Panc1 (cell line): ENCODE measurements at regions of chr5 and their contacts with region 1.

Region 1: GRCh38 chr5:77168161-77168875 is 42.2 kb upstream of the PDE8B start:
- DNase-seq: no peak
- ATAC-seq: peak; percentile 26; the same call in 1 of the 2 replicates
- H3K4me3 ChIP-seq: no peak overlapping the region
- H3K27ac ChIP-seq: no peak overlapping the region
- H3K4me1 ChIP-seq: no peaks in the 10 kb centered on the region
- H3K27me3 ChIP-seq: peaks cover 25% of the 10 kb centered on the region
- CTCF ChIP-seq: no peak

Region 2: GRCh38 chr5:76999423-76999822 is 168.9 kb before region 1 on chr5:
- CTCF ChIA-PET with region 1: no interaction called
- POLR2A ChIA-PET with region 1: no interaction called
- in situ Hi-C with region 1: no loop called
- intact Hi-C with region 1: no loop called
- DNase-seq: no peak
- ATAC-seq: no peak
- H3K4me3 ChIP-seq: no peak overlapping the region
- H3K27ac ChIP-seq: no peak overlapping the region
- H3K4me1 ChIP-seq: no peaks in the 10 kb centered on the region
- H3K27me3 ChIP-seq: peaks cover 7% of the 10 kb centered on the region; the same call in 1 of the 2 replicates
- CTCF ChIP-seq: no peak

Region 3: DNA sequence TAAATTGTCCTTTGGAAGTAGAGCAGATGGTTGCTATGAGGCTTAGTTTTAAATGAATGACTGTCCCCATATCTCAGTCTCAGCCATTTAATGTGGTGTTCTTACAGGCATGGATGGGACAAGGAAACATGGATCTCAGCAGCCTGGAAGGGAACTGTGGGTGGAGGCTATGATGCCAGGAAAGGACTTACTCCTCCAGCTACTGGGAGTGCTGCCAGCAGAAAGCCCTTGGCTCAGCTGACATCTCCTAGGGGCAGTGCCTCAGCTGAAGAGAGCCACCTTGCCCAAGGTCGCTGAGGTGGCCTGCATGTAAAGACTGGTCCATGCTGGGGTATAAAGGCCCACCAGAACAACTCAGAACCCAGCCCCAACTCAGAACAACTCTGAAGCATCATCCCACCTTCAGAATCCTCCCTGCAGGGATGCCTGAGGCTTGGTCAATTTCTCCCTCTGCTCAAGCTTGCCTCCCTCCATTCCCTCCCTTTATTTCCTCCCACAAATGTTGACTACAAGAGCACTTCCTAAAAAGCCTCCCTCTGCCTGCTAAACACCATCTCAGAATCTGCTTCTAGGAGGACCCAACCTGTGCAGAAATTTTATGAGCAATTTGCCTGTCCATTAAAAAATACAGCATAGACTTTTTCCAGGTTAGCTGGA is 40.3 kb after region 1 on chr5:
- CTCF ChIA-PET with region 1: no interaction called
- POLR2A ChIA-PET with region 1: interaction called, 17 read pairs
- in situ Hi-C with region 1: no loop called
- intact Hi-C with region 1: no loop called
- DNase-seq: no peak
- ATAC-seq: no peak
- H3K4me3 ChIP-seq: no peak overlapping the region
- H3K27ac ChIP-seq: no peak overlapping the region
- H3K4me1 ChIP-seq: peaks cover 3% of the 10 kb centered on the region
- H3K27me3 ChIP-seq: peaks cover 55% of the 10 kb centered on the region
- CTCF ChIP-seq: no peak